CD14-positive monocyte (primary cell): ENCODE measurements at regions of chr11 and their contacts with region 1.

Region 1: GRCh38 chr11:62645956-62646824 is at the start of gene GANAB:
- DNase-seq: peak; percentile 97 to 98 (median 97)
- H3K4me3 ChIP-seq: peak within 1 kb of the TSS; percentile 91 to 99 (median 91)
- H3K4me3 Mint-ChIP-seq: peak within 1 kb of the TSS; percentile 87 to 94
- H3K27ac ChIP-seq: peak within 1 kb of the TSS; percentile 74 to 90
- H3K27ac Mint-ChIP-seq: peak within 1 kb of the TSS; percentile 85 to 98 (median 91)
- H3K4me1 ChIP-seq: peaks cover 16 to 24% of the 10 kb centered on the region in 2 donors
- H3K4me1 Mint-ChIP-seq: peaks cover 18% of the 10 kb centered on the region
- H3K27me3 ChIP-seq: no peaks in the 10 kb centered on the region
- H3K27me3 Mint-ChIP-seq: peaks cover 0 to 4% (median 0%) of the 10 kb centered on the region in 3 donors
- CTCF ChIP-seq: no peak
- polyA plus RNA-seq, gene GANAB: 99.7 to 116 (median 109) TPM

Region 2: DNA sequence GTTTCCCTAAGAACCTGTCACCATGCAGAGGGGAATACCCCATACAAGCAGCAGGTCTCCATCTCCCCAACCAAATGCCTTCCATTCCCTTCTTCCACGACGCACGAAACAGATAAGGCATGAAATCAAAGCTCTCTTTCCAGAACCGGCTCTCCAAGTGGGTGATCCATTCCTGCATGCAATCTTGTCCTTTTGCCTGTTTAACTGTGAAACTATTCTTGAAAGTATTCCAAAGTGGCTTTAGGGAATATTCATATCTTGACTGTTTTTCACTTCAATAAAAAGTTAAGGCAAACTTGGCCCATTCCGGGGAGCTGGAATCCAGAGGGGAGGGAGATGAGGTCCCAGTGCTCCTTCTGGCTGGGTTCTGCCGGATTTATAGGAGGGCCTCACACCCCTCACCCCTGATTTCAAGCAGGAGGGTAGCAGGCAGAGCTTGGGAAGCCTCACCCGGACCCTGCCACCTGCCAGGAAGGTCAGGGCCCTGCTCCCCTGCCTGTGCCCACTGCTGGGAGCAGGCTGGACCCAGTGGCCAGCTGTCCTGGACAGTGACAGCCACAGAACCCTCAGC is 166.5 kb before region 1 on chr11:
- intact Hi-C with region 1: no loop called
- DNase-seq: no peak
- H3K4me3 ChIP-seq: no peak overlapping the region
- H3K4me3 Mint-ChIP-seq: no peak overlapping the region
- H3K27ac ChIP-seq: no peak overlapping the region
- H3K27ac Mint-ChIP-seq: no peak overlapping the region
- H3K4me1 ChIP-seq: no peaks in the 10 kb centered on the region
- H3K4me1 Mint-ChIP-seq: peaks cover 6% of the 10 kb centered on the region
- H3K27me3 ChIP-seq: no peaks in the 10 kb centered on the region
- H3K27me3 Mint-ChIP-seq: peaks cover 0 to 8% (median 0%) of the 10 kb centered on the region in 3 donors
- CTCF ChIP-seq: no peak

Region 3: DNA sequence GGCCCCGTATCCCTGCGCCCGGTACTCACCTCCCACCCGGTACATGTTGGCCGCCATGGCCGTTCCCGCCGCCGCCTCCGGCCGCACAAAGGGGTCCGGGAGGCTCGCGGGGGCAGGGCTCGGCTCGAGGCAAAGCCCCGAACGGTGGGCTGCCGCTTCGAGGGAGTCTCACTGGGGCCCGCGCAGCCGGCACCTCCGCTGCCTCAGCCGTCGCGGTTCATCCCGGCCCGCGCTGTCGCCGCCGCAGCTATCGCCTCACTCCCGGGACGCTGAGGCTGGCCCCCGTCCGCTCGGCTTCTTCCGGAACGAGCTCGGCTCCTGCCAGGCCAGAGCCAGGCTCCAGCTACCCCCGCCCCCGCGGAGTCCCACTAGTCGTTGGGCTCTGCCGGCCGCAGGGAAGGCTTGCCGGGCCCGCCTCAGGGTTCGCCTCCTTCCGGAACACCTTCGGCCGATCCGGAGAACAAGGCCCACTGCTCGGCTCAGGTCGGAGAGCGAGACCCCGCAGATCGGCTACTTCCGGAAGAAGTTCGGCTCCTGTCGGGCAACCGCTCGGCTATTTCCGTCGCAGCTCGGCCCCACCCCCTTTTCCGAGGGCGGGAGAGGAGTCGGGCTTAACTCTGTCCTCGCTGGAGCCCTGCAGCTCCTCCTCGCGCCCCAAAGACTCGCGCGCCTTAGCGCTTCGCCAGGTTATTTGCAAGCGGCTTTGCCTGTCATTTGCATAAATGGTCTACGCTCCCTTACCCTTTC is 44.6 kb before region 1 on chr11 and contains the start of gene MTA2:
- intact Hi-C with region 1: loop called in 1 of 2 experiments (anchors 5 kb)
- DNase-seq: peak; percentile 97
- H3K4me3 ChIP-seq: peak within 1 kb of the TSS; percentile 81 to 98 (median 93)
- H3K4me3 Mint-ChIP-seq: peak within 1 kb of the TSS; percentile 92 to 96
- H3K27ac ChIP-seq: peak within 1 kb of the TSS; percentile 79 to 86
- H3K27ac Mint-ChIP-seq: peak within 1 kb of the TSS; percentile 85 to 92 (median 88)
- H3K4me1 ChIP-seq: peaks cover 39 to 49% of the 10 kb centered on the region in 2 donors
- H3K4me1 Mint-ChIP-seq: peaks cover 53% of the 10 kb centered on the region
- H3K27me3 ChIP-seq: no peaks in the 10 kb centered on the region
- H3K27me3 Mint-ChIP-seq: no peaks in the 10 kb centered on the region
- CTCF ChIP-seq: no peak
- polyA plus RNA-seq, gene MTA2: 14.0 to 38.6 (median 17.6) TPM

Region 4: GRCh38 chr11:62627714-62628113 is 18.5 kb before region 1 on chr11:
- intact Hi-C with region 1: no loop called
- DNase-seq: no peak
- H3K4me3 ChIP-seq: no peak overlapping the region
- H3K4me3 Mint-ChIP-seq: no peak overlapping the region
- H3K27ac ChIP-seq: no peak overlapping the region
- H3K27ac Mint-ChIP-seq: peak overlapping the region in 1 of 7 donors; percentile 28
- H3K4me1 ChIP-seq: no peaks in the 10 kb centered on the region
- H3K4me1 Mint-ChIP-seq: no peaks in the 10 kb centered on the region
- H3K27me3 ChIP-seq: no peaks in the 10 kb centered on the region
- H3K27me3 Mint-ChIP-seq: peaks cover 0 to 3% (median 1%) of the 10 kb centered on the region in 3 donors
- CTCF ChIP-seq: no peak